A549 (cell line): ENCODE measurements at regions of chr2 and their contacts with region 1.

Region 1: GRCh38 chr2:74250189-74250631 is 51.8 kb downstream of the MTHFD2 start:
- DNase-seq: peak; percentile 56 to 78
- ATAC-seq: peak; percentile 74 to 89; a peak in 5 of 6 replicates
- H3K4me3 ChIP-seq: no peak overlapping the region
- H3K27ac ChIP-seq: no peak overlapping the region
- H3K4me1 ChIP-seq: no peaks in the 10 kb centered on the region
- CTCF ChIP-seq: peak; percentile 92
- EP300 ChIP-seq: no peak
- POLR2A ChIP-seq: no peak
- RAD21 ChIP-seq: peak; percentile 78 to 79

Region 2: DNA sequence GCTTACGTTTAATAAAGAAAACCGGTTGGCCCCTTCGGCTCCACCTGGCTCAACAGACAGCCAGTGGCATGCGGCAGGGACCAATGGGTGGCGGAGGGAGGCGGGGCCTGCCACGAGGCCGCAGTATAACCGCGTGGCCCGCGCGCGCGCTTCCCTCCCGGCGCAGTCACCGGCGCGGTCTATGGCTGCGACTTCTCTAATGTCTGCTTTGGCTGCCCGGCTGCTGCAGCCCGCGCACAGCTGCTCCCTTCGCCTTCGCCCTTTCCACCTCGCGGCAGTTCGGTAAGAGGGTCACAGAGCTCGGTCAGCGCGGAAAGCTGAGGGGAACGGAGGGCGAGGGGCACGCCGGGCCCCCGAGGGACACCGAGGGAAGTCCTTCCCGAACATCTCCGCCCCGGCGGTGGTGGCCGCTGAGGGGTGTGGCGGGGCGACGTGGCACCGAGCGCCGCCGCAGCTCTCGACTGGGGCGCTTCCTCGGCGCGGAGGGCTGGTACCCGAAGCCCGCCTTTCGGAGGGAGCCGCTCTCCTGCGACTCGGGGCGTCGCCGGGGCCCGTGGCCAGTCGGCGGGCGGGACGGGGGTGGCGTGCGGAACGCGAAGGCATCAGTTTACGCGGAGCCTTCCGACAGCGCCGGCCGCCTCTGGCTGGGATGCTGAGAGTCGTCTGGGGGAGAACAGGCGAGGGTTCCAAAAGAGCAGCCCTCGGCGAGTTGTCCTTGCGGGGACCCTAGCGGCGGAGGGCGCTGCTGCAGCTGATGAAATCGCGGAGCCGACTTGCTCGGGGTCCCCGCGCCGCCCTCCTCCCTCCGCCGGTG is 51.5 kb before region 1 on chr2 and contains the start of gene MTHFD2:
- CTCF ChIA-PET with region 1: interaction called, 12 read pairs
- POLR2A ChIA-PET with region 1: no interaction called
- DNase-seq: peak; percentile 99 to 100
- ATAC-seq: peak; percentile 92 to 95
- H3K4me3 ChIP-seq: peak within 1 kb of the TSS; percentile 94
- H3K27ac ChIP-seq: peak within 1 kb of the TSS; percentile 95 to 100
- H3K4me1 ChIP-seq: peaks cover 42% of the 10 kb centered on the region
- CTCF ChIP-seq: peak; percentile 54
- EP300 ChIP-seq: peak in 1 of 2 experiments; percentile 13; a peak in 1 of 5 replicates
- POLR2A ChIP-seq: peak; percentile 100
- RAD21 ChIP-seq: peak; percentile 26 to 27; a peak in 2 of 5 replicates
- polyA plus RNA-seq, gene MTHFD2: 429 and 608 TPM in 2 replicates

Region 3: GRCh38 chr2:74261204-74261864 is 11.1 kb after region 1 on chr2:
- CTCF ChIA-PET with region 1: interaction called, 69 read pairs
- POLR2A ChIA-PET with region 1: no interaction called
- DNase-seq: peak; percentile 50 to 52
- ATAC-seq: peak; percentile 79 to 88
- H3K4me3 ChIP-seq: no peak overlapping the region
- H3K27ac ChIP-seq: no peak overlapping the region
- H3K4me1 ChIP-seq: no peaks in the 10 kb centered on the region
- CTCF ChIP-seq: peak; percentile 64
- EP300 ChIP-seq: no peak
- POLR2A ChIP-seq: no peak
- RAD21 ChIP-seq: peak; percentile 64 to 80

Region 4: GRCh38 chr2:74328074-74328473 is 77.9 kb after region 1 on chr2:
- CTCF ChIA-PET with region 1: interaction called, 66 read pairs
- POLR2A ChIA-PET with region 1: no interaction called
- DNase-seq: no peak
- ATAC-seq: no peak
- H3K4me3 ChIP-seq: no peak overlapping the region
- H3K27ac ChIP-seq: no peak overlapping the region
- H3K4me1 ChIP-seq: no peaks in the 10 kb centered on the region
- CTCF ChIP-seq: no peak
- EP300 ChIP-seq: no peak
- POLR2A ChIP-seq: no peak
- RAD21 ChIP-seq: no peak

Region 5: DNA sequence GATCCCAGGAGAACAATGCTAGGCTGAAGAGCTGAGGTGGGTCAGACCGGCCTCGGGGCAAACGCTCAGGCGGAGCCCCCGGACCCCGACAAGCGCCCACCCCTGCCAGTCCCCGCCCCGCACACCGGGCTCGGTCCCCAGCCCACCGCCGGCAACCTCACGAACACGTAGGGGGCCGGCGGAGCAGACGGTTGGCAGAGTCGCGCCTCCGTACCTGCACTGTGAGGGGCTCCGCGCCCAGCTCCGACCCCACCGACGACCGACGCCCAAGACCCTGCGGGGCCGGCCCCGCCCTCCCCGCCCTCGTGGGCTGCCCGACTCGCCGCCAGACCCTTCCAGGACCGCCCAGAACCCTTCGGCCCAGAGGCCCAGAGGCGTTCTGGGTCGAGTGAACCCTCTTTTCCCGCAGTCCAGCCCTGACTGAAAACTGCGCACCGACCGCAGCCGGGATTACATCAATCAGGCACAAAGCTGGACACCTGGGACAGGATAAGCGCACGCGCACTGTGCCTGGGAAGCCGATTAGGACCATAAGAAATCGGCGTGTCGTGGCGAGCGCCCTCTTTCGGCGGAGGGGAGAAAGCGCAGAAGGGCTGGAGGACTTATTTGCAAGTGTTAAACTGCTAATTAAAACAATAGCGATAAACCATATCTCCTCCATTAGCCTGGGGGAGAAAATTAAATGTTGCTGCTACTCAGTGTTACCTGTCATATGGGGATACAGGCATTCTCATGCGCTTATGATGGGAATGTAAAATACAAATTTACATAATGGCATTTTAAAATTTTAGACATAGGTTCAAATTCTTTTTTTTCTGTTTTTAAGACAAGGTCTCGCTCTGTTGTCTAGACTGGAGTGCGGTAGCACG is 141.6 kb after region 1 on chr2:
- CTCF ChIA-PET with region 1: interaction called, 11 read pairs
- POLR2A ChIA-PET with region 1: no interaction called
- DNase-seq: peak; percentile 87 to 95
- ATAC-seq: peak; percentile 88 to 92
- H3K4me3 ChIP-seq: peak overlapping the region; percentile 72
- H3K27ac ChIP-seq: peak overlapping the region; percentile 85 to 93
- H3K4me1 ChIP-seq: peaks cover 24% of the 10 kb centered on the region
- CTCF ChIP-seq: peak; percentile 99
- EP300 ChIP-seq: no peak
- POLR2A ChIP-seq: peak; percentile 78
- RAD21 ChIP-seq: peak; percentile 48 to 61; a peak in 4 of 5 replicates

Region 6: GRCh38 chr2:74515981-74516633 is 265.9 kb after region 1 on chr2:
- CTCF ChIA-PET with region 1: no interaction called
- POLR2A ChIA-PET with region 1: no interaction called
- DNase-seq: no peak
- ATAC-seq: no peak
- H3K4me3 ChIP-seq: no peak overlapping the region
- H3K27ac ChIP-seq: no peak overlapping the region
- H3K4me1 ChIP-seq: peaks cover 6% of the 10 kb centered on the region; the same call in 1 of the 3 replicates
- CTCF ChIP-seq: no peak
- EP300 ChIP-seq: no peak
- POLR2A ChIP-seq: no peak
- RAD21 ChIP-seq: no peak

Region 7: GRCh38 chr2:75123876-75124275 is 873.7 kb after region 1 on chr2:
- CTCF ChIA-PET with region 1: no interaction called
- POLR2A ChIA-PET with region 1: no interaction called
- DNase-seq: no peak
- ATAC-seq: no peak
- H3K4me3 ChIP-seq: no peak overlapping the region
- H3K27ac ChIP-seq: no peak overlapping the region
- H3K4me1 ChIP-seq: no peaks in the 10 kb centered on the region
- CTCF ChIP-seq: no peak
- EP300 ChIP-seq: no peak
- POLR2A ChIP-seq: no peak
- RAD21 ChIP-seq: no peak